Lower leg skin (tissue), 4 donors: ENCODE measurements at regions of chr3 and their contacts with region 1.

Region 1: GRCh38 chr3:86774082-86774691 is 216.8 kb downstream of the VGLL3 start:
- DNase-seq: no peak
- H3K4me3 ChIP-seq: no peak overlapping the region
- CTCF ChIP-seq: no peak
- POLR2A ChIP-seq: no peak

Region 2: DNA sequence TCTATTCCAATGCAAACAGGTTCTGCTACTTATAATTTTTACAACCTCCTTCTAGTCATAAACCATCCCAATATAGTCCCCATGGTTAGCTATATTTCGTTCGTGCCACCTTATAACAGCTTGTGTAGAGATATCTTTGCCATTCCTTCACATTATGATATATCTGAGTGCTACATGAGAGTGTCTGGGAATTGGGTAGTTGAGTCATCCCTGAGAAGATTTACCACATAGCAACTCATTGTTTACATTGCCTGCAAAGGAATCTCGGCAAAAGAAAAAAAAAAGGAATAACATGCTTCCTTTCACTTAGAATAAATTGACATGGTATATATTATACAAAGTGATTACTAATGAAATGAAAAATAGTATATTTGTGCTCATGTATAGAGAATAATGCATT is 302.8 kb after region 1 on chr3:
- intact Hi-C with region 1: loop called (anchors 5 kb)
- DNase-seq: no peak
- H3K4me3 ChIP-seq: no peak overlapping the region
- CTCF ChIP-seq: no peak
- POLR2A ChIP-seq: no peak

Region 3: DNA sequence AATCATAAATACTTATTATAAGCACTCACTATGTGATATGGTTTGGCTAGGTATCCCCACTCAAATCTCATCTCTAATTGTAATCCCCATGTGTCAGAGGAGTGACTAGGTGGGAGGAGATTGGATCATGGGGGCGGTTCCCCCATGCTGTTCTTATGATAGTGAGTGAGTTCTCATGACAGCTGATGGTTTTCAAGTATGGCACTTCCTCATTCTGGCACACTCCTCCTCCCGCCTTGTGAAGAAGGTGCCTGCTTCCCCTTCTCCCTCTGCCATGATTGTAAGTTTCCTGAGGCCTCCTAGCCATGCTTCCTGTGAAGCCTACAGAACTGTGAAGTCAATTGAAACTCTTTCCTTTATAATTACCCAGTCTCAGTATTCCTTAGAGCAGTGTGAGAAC is 399.6 kb after region 1 on chr3:
- intact Hi-C with region 1: no loop called
- DNase-seq: no peak
- H3K4me3 ChIP-seq: no peak overlapping the region
- CTCF ChIP-seq: no peak
- POLR2A ChIP-seq: no peak